Activated T-helper 2 cell treated with anti-CD3 and anti-CD28 coated beads, Interferon-gamma antibody, Interleukin-2, Interleukin-4, amounts not matched to agents 10 μg/mL and 5 μg/mL and 100 μg/mL, durations not matched to agents 14 hours and 24 hours and 36 hours (primary cell): ENCODE measurements at regions of chrX and their contacts with region 1.

Region 1: DNA sequence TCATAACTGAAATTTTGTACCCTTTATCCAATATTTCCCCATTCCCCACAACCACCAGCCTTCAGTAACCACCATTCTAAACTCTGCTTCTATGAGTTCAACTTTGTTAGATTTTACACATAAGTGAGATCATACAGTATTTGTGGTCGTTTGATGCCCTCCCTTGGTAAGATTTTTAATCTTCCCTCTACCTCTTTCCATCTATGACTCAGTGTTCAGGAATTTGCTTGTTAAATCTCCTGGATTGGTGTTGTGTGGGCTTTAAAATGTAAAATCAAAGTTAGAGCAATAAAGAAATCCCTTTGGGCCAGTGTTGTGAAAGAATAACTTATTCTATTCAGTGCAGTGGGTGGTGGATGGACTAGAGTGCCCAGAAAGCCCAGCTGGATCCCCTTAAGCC is 37.4 kb downstream of the SLC16A2 start:
- DNase-seq: no peak
- H3K4me3 Mint-ChIP-seq: no peak overlapping the region
- H3K27ac Mint-ChIP-seq: no peak overlapping the region
- H3K4me1 Mint-ChIP-seq: no peaks in the 10 kb centered on the region
- H3K27me3 Mint-ChIP-seq: no peaks in the 10 kb centered on the region

Region 2: GRCh38 chrX:74382613-74383012 is 76.1 kb before region 1 on chrX:
- intact Hi-C with region 1: loop called (anchors 5 kb)
- DNase-seq: peak; percentile 21
- H3K4me3 Mint-ChIP-seq: no peak overlapping the region
- H3K27ac Mint-ChIP-seq: no peak overlapping the region
- H3K4me1 Mint-ChIP-seq: peaks cover 2% of the 10 kb centered on the region
- H3K27me3 Mint-ChIP-seq: no peaks in the 10 kb centered on the region